ENCODE measurements at regions of chr2 and their contacts with region 1.

Region 1: DNA sequence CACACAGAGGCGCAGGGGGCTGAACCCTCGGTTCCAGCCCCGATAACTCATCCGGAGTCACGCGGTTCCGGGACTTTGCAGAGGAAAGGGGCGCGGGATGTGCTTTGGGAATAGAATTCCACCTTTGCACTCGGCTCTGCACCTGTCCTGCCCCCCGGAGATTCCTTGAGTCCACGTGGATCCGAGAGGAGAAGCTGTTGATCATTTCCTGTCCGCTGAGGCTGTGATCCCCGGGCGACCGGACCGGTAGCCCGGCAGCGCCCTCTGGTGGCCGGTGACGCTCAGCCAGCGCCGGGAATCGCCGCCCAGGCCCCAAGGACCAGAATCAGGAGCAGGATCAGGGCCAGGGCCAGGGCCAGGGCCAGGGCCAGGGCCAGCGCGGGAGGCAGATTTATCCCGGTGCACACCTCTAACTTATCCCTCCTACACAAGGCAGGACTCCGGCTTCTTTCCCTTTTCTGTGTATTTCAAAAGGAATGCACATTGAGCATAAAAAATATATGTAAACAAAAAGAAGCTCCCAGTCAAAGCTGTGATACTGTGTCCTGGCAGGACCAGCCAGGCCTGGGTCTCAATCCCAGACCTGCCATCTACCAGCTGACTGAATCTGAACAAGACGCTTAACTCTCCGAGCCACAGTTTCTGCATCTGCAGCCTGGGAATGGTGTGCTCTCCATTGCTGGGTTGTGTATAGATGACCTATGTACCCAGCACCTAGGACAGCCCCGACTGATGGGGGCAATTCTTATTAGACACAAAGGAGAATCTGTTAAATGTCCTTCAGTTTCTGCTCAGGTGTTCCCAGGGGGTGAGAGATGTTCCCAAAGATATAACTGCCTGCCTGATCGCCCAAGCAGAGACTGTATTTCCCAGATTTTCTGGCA is 8.5 kb upstream of the SPATA3 start:
- DNase-seq: peak; percentile 95
- H3K4me3 ChIP-seq: peak overlapping the region in 7 of 8 donors; percentile 25 to 69 (median 32)
- H3K27ac ChIP-seq: no peak overlapping the region
- H3K4me1 ChIP-seq: peaks cover 4 to 11% (median 9%) of the 10 kb centered on the region in 6 donors
- H3K27me3 ChIP-seq: peaks cover 0 to 44% (median 16%) of the 10 kb centered on the region in 7 donors
- CTCF ChIP-seq: peak; percentile 79 to 98 (median 96)
- POLR2A ChIP-seq: no peak

Region 2: GRCh38 chr2:230824406-230824978 is 162.9 kb before region 1 on chr2:
- intact Hi-C with region 1: loop called (anchors 2 kb)
- DNase-seq: no peak
- H3K4me3 ChIP-seq: peak overlapping the region in 1 of 8 donors; percentile 34
- H3K27ac ChIP-seq: no peak overlapping the region
- H3K4me1 ChIP-seq: peaks cover 6 to 25% (median 19%) of the 10 kb centered on the region in 6 donors
- H3K27me3 ChIP-seq: peaks cover 0 to 50% (median 37%) of the 10 kb centered on the region in 7 donors
- CTCF ChIP-seq: peak; percentile 36 to 86 (median 69)
- POLR2A ChIP-seq: no peak

Region 3: GRCh38 chr2:230864598-230865306 is 122.6 kb before region 1 on chr2 and contains the start of gene ITM2C:
- intact Hi-C with region 1: no loop called
- DNase-seq: peak; percentile 91
- H3K4me3 ChIP-seq: peak within 1 kb of the TSS; percentile 54 to 83 (median 72)
- H3K27ac ChIP-seq: peak within 1 kb of the TSS; percentile 46 to 84 (median 66)
- H3K4me1 ChIP-seq: peaks cover 25 to 74% (median 52%) of the 10 kb centered on the region in 6 donors
- H3K27me3 ChIP-seq: peaks cover 0 to 64% (median 13%) of the 10 kb centered on the region in 7 donors
- CTCF ChIP-seq: peak in 7 of 11 experiments; percentile 19 to 70 (median 56)
- POLR2A ChIP-seq: peak in 1 of 3 donors; percentile 5
- total RNA-seq, gene ITM2C: 58.5 to 150 (median 87.6) TPM

Region 4: GRCh38 chr2:230913406-230914143 is 73.8 kb before region 1 on chr2:
- intact Hi-C with region 1: loop called (anchors 10 kb)
- DNase-seq: peak; percentile 78
- H3K4me3 ChIP-seq: no peak overlapping the region
- H3K27ac ChIP-seq: peak overlapping the region in 2 of 8 donors; percentile 22 to 42
- H3K4me1 ChIP-seq: peaks cover 0 to 12% (median 3%) of the 10 kb centered on the region in 6 donors
- H3K27me3 ChIP-seq: peaks cover 0 to 14% (median 0%) of the 10 kb centered on the region in 7 donors
- CTCF ChIP-seq: peak; percentile 36 to 73 (median 58)
- POLR2A ChIP-seq: no peak

Region 5: GRCh38 chr2:232568161-232568560 is 1580.8 kb after region 1 on chr2:
- intact Hi-C with region 1: no loop called
- DNase-seq: no peak
- H3K4me3 ChIP-seq: no peak overlapping the region
- H3K27ac ChIP-seq: no peak overlapping the region
- H3K4me1 ChIP-seq: no peaks in the 10 kb centered on the region
- H3K27me3 ChIP-seq: no peaks in the 10 kb centered on the region
- CTCF ChIP-seq: no peak
- POLR2A ChIP-seq: no peak

Measured in spleen (tissue), 13 donors.